PC-9 (cell line): ENCODE measurements at regions of chr7 and their contacts with region 1.

Region 1: GRCh38 chr7:84412161-84412969 is 217.8 kb upstream of the SEMA3A start:
- DNase-seq: peak; percentile 44 to 95
- H3K4me3 ChIP-seq: no peak overlapping the region
- H3K27ac ChIP-seq: peak overlapping the region; percentile 93
- H3K4me1 ChIP-seq: peaks cover 28% of the 10 kb centered on the region
- H3K27me3 ChIP-seq: no peaks in the 10 kb centered on the region
- CTCF ChIP-seq: no peak

Region 2: DNA sequence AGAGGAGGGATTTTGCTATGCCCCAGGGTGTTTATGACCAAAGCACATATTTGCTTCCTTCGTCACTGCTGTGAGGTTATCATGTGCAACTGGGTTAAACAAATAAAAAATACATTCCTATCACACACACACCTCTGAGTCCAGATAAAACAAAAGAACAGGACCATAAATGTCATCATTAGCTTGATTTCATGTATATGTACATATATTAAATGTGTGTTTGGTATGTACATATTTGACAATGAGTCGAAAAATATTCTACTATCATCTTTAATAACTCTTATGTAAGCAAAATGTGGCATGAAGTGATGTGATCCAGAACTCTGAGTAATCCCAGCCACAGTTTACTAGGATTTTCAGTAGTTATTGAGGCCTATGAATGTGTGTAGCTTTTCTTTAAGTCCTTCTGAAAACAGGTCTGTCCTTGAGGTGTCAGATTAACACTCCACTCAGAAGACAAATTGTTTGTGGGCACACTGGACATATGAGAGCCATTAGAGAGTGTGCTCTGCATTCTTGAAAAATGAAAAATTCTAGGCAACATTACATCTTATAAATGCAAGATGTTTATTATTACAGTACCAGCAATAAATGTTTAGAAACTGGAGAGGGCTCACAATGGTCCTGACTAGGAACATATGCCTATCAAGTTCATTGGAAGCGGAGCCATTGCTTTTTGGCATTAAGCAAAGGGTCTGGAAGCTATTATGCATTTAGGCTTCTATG is 117.3 kb after region 1 on chr7:
- CTCF ChIA-PET with region 1: no interaction called
- POLR2A ChIA-PET with region 1: interaction called, 3 read pairs
- intact Hi-C with region 1: loop called (anchors 1 kb)
- DNase-seq: peak; percentile 63 to 89
- H3K4me3 ChIP-seq: no peak overlapping the region
- H3K27ac ChIP-seq: peak overlapping the region; percentile 66
- H3K4me1 ChIP-seq: peaks cover 27% of the 10 kb centered on the region
- H3K27me3 ChIP-seq: no peaks in the 10 kb centered on the region
- CTCF ChIP-seq: no peak

Region 3: GRCh38 chr7:84675633-84676034 is 263.3 kb after region 1 on chr7:
- CTCF ChIA-PET with region 1: no interaction called
- POLR2A ChIA-PET with region 1: no interaction called
- intact Hi-C with region 1: loop called (anchors 1 kb)
- DNase-seq: peak; percentile 83 to 91
- H3K4me3 ChIP-seq: no peak overlapping the region
- H3K27ac ChIP-seq: peak overlapping the region; percentile 32; the same call in 1 of the 2 replicates
- H3K4me1 ChIP-seq: peaks cover 9% of the 10 kb centered on the region; the same call in 1 of the 2 replicates
- H3K27me3 ChIP-seq: no peaks in the 10 kb centered on the region
- CTCF ChIP-seq: no peak